H1 (cell line): ENCODE measurements at regions of chr1 and their contacts with region 1.

Region 1: GRCh38 chr1:54406339-54407153 is at the start of gene SSBP3:
- DNase-seq: peak in 1 of 2 experiments; percentile 96
- H3K4me3 ChIP-seq: peak within 1 kb of the TSS; percentile 75 to 90 (median 83)
- H3K27ac ChIP-seq: peak within 1 kb of the TSS; percentile 90
- H3K4me1 ChIP-seq: peaks cover 14 to 35% (median 23%) of the 10 kb centered on the region in 4 experiments
- H3K27me3 ChIP-seq: no peaks in the 10 kb centered on the region
- CTCF ChIP-seq: no peak
- EP300 ChIP-seq: no peak
- POLR2A ChIP-seq: peak in 1 of 2 experiments; percentile 77; a peak in 1 of 3 replicates
- RAD21 ChIP-seq: peak in 1 of 2 experiments; percentile 3; a peak in 1 of 4 replicates
- total RNA-seq, gene SSBP3: 133 and 134 TPM in 2 replicates

Region 2: DNA sequence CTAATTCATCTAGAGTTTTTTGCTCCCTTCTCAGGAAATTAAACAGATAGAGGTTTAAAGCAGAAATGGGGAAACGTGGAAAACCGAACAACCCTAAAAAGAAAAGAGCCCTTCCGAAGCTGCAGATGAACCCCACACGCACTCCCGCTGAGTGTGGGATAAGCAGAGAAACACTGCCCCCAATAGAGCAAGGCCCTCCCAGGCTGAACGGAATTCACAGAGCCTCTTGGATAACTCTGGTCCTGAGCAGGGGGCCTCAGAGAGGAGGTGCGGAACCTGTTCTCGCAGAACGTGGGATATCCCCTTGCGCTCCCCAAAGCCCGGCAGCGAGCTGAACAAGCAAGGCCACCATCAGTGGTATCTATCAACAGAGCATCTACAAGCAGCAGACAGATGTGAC is 45.2 kb before region 1 on chr1:
- CTCF ChIA-PET with region 1: interaction called, 11 read pairs
- POLR2A ChIA-PET with region 1: interaction called, 16 read pairs
- DNase-seq: no peak
- H3K4me3 ChIP-seq: no peak overlapping the region
- H3K27ac ChIP-seq: no peak overlapping the region
- H3K4me1 ChIP-seq: peaks cover 16 to 41% (median 26%) of the 10 kb centered on the region in 4 experiments
- H3K27me3 ChIP-seq: no peaks in the 10 kb centered on the region
- CTCF ChIP-seq: peak in 2 of 3 experiments; percentile 33 to 37; a peak in 3 of 4 replicates
- EP300 ChIP-seq: no peak
- POLR2A ChIP-seq: no peak
- RAD21 ChIP-seq: peak; percentile 45 to 62

Region 3: DNA sequence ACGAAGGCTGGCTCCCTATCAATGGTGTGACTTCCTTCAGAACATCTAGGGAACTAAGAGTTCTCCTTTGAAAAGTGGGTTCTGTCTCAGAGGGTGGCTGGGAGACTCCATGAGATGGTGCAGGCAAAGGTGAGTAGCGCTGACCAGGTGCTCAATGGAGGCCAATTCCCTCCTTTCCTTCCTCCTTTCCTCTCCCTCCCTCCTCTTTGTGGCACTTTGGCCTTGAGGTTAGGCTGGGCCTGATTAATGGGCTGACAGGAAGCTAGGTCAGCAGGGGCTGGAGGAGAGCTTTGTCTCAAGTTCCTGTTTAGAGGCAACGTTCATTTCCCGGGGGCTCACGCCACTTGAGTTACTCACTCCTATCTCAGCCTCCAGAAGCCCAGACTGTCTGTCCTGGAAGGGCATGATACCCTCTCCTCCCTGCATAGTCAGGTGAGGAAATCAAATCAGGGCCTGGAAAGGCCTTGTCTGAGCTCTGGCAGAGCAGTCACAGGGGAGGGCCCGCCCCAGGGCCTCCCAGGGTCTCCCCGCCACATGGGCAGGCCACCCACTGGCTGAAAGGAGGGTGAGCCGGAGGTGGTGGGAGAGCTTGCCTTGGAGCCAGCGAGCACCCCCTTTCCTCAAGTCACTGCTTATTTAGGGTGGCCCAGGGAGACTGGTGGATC is 58.1 kb after region 1 on chr1:
- CTCF ChIA-PET with region 1: no interaction called
- POLR2A ChIA-PET with region 1: interaction called, 14 read pairs
- DNase-seq: peak in 1 of 2 experiments; percentile 52
- H3K4me3 ChIP-seq: no peak overlapping the region
- H3K27ac ChIP-seq: peak overlapping the region; percentile 26; the same call in 1 of the 2 replicates
- H3K4me1 ChIP-seq: peaks cover 4 to 39% (median 20%) of the 10 kb centered on the region in 4 experiments
- H3K27me3 ChIP-seq: no peaks in the 10 kb centered on the region
- CTCF ChIP-seq: no peak
- EP300 ChIP-seq: no peak
- POLR2A ChIP-seq: 0 out of 3 replicates have a peak, but pooled peaks of 1 of the 2 experiments have one; percentile 30
- RAD21 ChIP-seq: no peak

Region 4: DNA sequence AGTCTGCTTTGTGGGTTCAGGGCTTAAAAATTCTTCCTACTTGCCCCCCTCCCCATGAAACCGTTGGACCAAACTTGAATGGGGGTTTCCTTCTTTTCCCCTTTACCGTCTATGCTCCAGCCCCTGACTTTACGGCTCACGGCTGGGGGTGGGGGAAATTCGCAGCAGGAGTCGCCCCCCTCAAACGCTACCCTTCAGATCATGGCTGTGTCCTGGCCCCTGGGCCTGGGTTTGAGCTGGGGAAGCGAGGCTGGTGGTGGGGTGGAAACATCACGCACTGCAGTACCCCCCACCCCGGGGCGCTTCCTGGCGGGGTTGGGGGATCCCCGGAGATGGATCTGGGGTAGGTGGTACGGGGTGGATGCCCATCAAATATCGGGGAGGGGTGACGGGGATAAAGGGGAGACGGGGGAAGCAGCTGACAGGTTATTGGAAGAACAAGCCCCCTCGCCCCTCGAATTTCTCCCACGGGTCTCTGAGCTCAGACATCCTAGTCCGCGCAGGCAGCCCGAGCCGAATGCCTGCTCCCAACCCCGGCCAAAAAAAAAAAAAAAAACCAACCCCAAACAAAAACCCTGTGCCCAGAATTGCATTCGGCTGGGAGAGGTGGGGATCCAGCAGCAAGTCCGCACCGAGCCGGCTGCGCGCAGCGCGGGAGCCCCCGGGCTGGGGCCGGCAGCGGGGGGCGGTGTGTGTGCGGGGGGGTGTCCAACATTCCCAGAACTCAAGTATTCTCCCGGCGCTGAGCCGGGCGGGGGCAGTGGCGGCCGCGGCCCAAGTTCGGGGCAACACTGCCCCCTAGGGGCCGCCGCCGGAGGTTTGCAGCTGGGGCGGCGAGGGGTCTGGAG is 82.5 kb after region 1 on chr1:
- CTCF ChIA-PET with region 1: interaction called, 18 read pairs
- POLR2A ChIA-PET with region 1: interaction called, 216 read pairs
- DNase-seq: peak; percentile 74 to 96
- H3K4me3 ChIP-seq: peak overlapping the region; percentile 24 to 69 (median 64); a peak in 7 of 8 replicates
- H3K27ac ChIP-seq: peak overlapping the region; percentile 96
- H3K4me1 ChIP-seq: peaks cover 7 to 22% (median 15%) of the 10 kb centered on the region in 4 experiments
- H3K27me3 ChIP-seq: peaks cover 0 to 18% (median 11%) of the 10 kb centered on the region in 4 experiments; a peak in 6 of 7 replicates
- CTCF ChIP-seq: peak; percentile 75 to 96 (median 79)
- EP300 ChIP-seq: peak in 1 of 2 experiments; percentile 84; a peak in 1 of 3 replicates
- POLR2A ChIP-seq: peak in 1 of 2 experiments; percentile 47; a peak in 1 of 3 replicates
- RAD21 ChIP-seq: peak; percentile 88 to 90